Activated CD4-positive, alpha-beta memory T cell treated with anti-CD3 and anti-CD28 coated beads for 36 hours (primary cell): ENCODE measurements at regions of chr16 and their contacts with region 1.

Region 1: DNA sequence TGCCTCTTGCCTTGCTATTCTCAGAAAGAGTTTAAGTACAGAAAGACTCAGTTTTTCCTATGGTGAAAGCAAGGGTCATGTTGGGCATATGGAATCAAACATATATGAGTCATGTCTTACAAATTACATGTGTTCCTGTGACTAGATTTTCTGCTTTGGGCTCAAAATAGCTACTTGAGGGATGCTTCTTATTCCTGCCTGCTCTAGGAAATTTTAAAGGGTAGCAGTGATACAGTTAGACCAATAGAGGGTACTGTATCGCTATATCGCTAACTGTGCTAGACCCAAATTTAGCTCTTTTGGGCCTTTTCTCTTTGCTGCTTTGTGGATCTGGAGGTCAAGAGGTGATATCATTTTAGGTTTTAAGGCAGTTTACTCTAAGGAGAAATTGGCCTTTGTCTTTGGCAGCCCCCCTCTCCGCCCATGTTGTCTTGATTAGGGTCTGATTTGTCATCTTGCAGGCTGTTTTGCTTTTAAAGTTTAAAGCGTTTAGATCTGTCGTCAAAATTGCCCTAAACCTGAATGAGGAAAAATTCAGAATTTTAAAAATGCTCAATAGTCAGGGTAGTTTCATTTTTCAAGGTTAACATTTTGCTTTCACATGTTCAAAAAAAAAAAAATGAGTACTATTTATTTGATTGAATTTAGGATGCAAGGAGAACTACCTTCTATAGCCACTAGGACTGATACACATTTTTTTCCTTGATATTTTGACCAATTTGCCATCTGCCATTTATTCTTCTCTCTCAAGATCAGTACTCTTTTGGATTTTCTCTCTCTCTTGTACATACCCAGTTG is 8.8 kb downstream of the NFATC3 start:
- DNase-seq: no peak
- H3K4me3 Mint-ChIP-seq: peak overlapping the region; percentile 0
- H3K27ac Mint-ChIP-seq: peak overlapping the region; percentile 50
- H3K4me1 Mint-ChIP-seq: peaks cover 73% of the 10 kb centered on the region
- H3K27me3 Mint-ChIP-seq: no peaks in the 10 kb centered on the region

Region 2: GRCh38 chr16:68074850-68075555 is 19.0 kb before region 1 on chr16:
- CTCF ChIA-PET with region 1: interaction called, 12 read pairs
- POLR2A ChIA-PET with region 1: no interaction called
- intact Hi-C with region 1: no loop called
- DNase-seq: peak; percentile 84
- H3K4me3 Mint-ChIP-seq: no peak overlapping the region
- H3K27ac Mint-ChIP-seq: peak overlapping the region; percentile 87
- H3K4me1 Mint-ChIP-seq: peaks cover 76% of the 10 kb centered on the region
- H3K27me3 Mint-ChIP-seq: no peaks in the 10 kb centered on the region

Region 3: GRCh38 chr16:68116256-68116867 is 22.3 kb after region 1 on chr16:
- CTCF ChIA-PET with region 1: interaction called, 21 read pairs
- POLR2A ChIA-PET with region 1: no interaction called
- intact Hi-C with region 1: loop called (anchors 1 kb)
- DNase-seq: no peak
- H3K4me3 Mint-ChIP-seq: no peak overlapping the region
- H3K27ac Mint-ChIP-seq: peak overlapping the region; percentile 33
- H3K4me1 Mint-ChIP-seq: peaks cover 85% of the 10 kb centered on the region
- H3K27me3 Mint-ChIP-seq: no peaks in the 10 kb centered on the region

Region 4: GRCh38 chr16:68128577-68129305 is 34.7 kb after region 1 on chr16:
- CTCF ChIA-PET with region 1: interaction called, 11 read pairs
- POLR2A ChIA-PET with region 1: no interaction called
- intact Hi-C with region 1: no loop called
- DNase-seq: no peak
- H3K4me3 Mint-ChIP-seq: no peak overlapping the region
- H3K27ac Mint-ChIP-seq: peak overlapping the region; percentile 33
- H3K4me1 Mint-ChIP-seq: peaks cover 56% of the 10 kb centered on the region
- H3K27me3 Mint-ChIP-seq: no peaks in the 10 kb centered on the region

Region 5: DNA sequence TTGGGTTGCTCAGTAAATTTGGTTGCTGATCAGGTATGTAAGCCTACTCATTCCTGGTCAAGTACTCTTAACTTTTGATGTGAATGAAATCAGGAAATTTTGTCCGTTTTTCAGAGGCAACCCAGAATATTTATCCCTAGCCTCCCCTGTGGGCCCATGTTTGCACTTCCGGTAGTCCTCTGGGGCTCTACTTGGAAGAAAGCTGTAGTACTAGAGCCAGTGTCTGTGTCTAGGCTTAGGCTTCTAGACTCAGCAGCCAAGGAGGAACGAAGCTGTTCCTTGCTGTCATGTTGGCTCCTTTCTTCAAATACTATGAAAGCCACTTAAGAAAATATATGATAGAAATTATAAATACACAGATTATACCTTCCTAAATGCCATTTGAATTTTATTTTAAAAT is 120.7 kb after region 1 on chr16:
- CTCF ChIA-PET with region 1: interaction called, 5 read pairs
- POLR2A ChIA-PET with region 1: no interaction called
- intact Hi-C with region 1: loop called (anchors 5 kb)
- DNase-seq: no peak
- H3K4me3 Mint-ChIP-seq: no peak overlapping the region
- H3K27ac Mint-ChIP-seq: no peak overlapping the region
- H3K4me1 Mint-ChIP-seq: peaks cover 28% of the 10 kb centered on the region
- H3K27me3 Mint-ChIP-seq: no peaks in the 10 kb centered on the region

Region 6: GRCh38 chr16:68229431-68230198 is 135.6 kb after region 1 on chr16:
- CTCF ChIA-PET with region 1: interaction called, 28 read pairs
- POLR2A ChIA-PET with region 1: no interaction called
- intact Hi-C with region 1: loop called (anchors 2 kb)
- DNase-seq: peak; percentile 62
- H3K4me3 Mint-ChIP-seq: no peak overlapping the region
- H3K27ac Mint-ChIP-seq: peak overlapping the region; percentile 43
- H3K4me1 Mint-ChIP-seq: peaks cover 37% of the 10 kb centered on the region
- H3K27me3 Mint-ChIP-seq: no peaks in the 10 kb centered on the region